H1 (cell line): ENCODE measurements at regions of chr9 and their contacts with region 1.

Region 1: GRCh38 chr9:113340017-113340699 is at the start of gene WDR31:
- DNase-seq: peak; percentile 73 to 94
- H3K4me3 ChIP-seq: peak within 1 kb of the TSS; percentile 66 to 81 (median 70)
- H3K27ac ChIP-seq: no peak within 1 kb of the TSS
- H3K4me1 ChIP-seq: peaks cover 0 to 2% (median 0%) of the 10 kb centered on the region in 4 experiments; a peak in 2 of 7 replicates
- H3K27me3 ChIP-seq: peaks cover 0 to 7% (median 3%) of the 10 kb centered on the region in 4 experiments; a peak in 2 of 7 replicates
- CTCF ChIP-seq: no peak
- EP300 ChIP-seq: no peak
- POLR2A ChIP-seq: peak; percentile 56 to 72
- RAD21 ChIP-seq: 0 out of 4 replicates have a peak, but pooled peaks of 1 of the 2 experiments have one; percentile 7
- total RNA-seq, gene WDR31: 0.28 and 0.40 TPM in 2 replicates

Region 2: DNA sequence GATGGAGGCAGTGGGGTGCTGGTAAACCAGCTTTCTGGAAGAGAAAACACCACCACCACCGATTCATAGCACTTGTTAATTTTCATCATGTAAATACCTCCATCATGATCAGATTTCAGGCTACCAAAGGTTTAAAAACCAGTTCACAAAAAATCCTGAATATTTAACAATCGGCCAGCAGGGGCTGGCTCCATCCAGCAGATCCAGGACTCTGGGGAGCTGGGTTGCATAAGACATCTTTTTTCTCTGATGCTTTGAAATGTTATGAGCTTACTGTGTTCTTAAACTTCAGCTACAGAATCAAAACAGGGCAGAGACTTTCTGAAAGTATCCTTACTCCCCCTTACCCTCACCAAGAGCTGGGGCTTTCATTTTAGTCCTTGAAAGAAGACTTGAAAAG is 22.4 kb before region 1 on chr9:
- CTCF ChIA-PET with region 1: interaction called, 12 read pairs
- POLR2A ChIA-PET with region 1: no interaction called
- DNase-seq: no peak
- H3K4me3 ChIP-seq: no peak overlapping the region
- H3K27ac ChIP-seq: no peak overlapping the region
- H3K4me1 ChIP-seq: no peaks in the 10 kb centered on the region
- H3K27me3 ChIP-seq: peaks cover 0 to 2% (median under 1%) of the 10 kb centered on the region in 4 experiments; a peak in 2 of 7 replicates
- CTCF ChIP-seq: peak in 2 of 3 experiments; percentile 1 to 7; a peak in 2 of 4 replicates
- EP300 ChIP-seq: no peak
- POLR2A ChIP-seq: no peak
- RAD21 ChIP-seq: 0 out of 4 replicates have a peak, but pooled peaks of 1 of the 2 experiments have one; percentile 4

Region 3: GRCh38 chr9:113376634-113377567 is 36.7 kb after region 1 on chr9 and contains the start of gene HDHD3:
- CTCF ChIA-PET with region 1: no interaction called
- POLR2A ChIA-PET with region 1: interaction called, 11 read pairs
- DNase-seq: peak; percentile 73 to 87
- H3K4me3 ChIP-seq: peak within 1 kb of the TSS; percentile 54 to 98 (median 82)
- H3K27ac ChIP-seq: no peak within 1 kb of the TSS
- H3K4me1 ChIP-seq: peaks cover 0 to 4% (median 2%) of the 10 kb centered on the region in 4 experiments; a peak in 4 of 7 replicates
- H3K27me3 ChIP-seq: no peaks in the 10 kb centered on the region; a peak in 1 of 7 replicates
- CTCF ChIP-seq: no peak
- EP300 ChIP-seq: no peak
- POLR2A ChIP-seq: peak; percentile 44 to 72
- RAD21 ChIP-seq: no peak
- total RNA-seq, gene HDHD3: 10.4 and 12.1 TPM in 2 replicates